Activated T-helper 1 cell treated with anti-CD3 and anti-CD28 coated beads, Interleukin-12 subunit alpha, Interleukin-12 subunit beta, Interleukin-2, Interleukin-4 antibody, amounts not matched to agents 30 ng/mL and 10 ng/mL and 1 ng/mL, durations not matched to agents 14 hours and 24 hours and 36 hours (primary cell): ENCODE measurements at regions of chr16 and their contacts with region 1.

Region 1: DNA sequence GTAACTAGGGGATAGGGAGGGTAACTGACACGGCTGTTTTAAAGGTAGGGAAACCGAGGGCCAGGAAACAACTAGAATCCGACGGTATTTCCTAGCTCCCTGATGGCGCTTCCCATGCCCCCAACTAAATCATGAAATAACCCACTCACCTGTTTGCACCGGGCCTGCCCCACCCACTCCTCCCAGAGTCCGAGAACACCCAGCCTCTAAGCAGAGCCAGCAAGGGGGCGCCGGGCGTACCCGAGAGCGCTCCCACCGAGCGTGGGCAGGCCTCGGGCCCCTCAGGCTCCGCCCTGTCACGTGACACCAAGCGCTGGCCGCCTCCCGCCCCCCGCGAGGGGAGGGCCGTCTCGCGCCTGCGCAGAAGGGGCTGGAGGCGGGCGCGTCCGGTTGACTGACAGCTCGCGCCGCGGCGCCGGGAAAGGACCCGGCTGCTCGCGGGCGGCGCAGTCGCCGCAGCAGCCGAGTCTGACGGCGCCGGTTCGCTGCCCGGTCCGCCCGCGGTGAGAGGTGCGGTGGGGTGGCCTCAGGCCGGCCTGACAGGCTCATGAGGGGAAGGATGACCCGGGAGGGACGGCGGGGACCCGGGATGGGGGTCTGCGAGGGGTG is at the start of gene KIAA0513:
- DNase-seq: peak; percentile 96
- H3K4me3 Mint-ChIP-seq: peak within 1 kb of the TSS; percentile 91
- H3K27ac Mint-ChIP-seq: peak within 1 kb of the TSS; percentile 93
- H3K4me1 Mint-ChIP-seq: peaks cover 36% of the 10 kb centered on the region
- H3K27me3 Mint-ChIP-seq: no peaks in the 10 kb centered on the region
- total RNA-seq, gene KIAA0513: 12.6 and 12.9 TPM in 2 replicates

Region 2: DNA sequence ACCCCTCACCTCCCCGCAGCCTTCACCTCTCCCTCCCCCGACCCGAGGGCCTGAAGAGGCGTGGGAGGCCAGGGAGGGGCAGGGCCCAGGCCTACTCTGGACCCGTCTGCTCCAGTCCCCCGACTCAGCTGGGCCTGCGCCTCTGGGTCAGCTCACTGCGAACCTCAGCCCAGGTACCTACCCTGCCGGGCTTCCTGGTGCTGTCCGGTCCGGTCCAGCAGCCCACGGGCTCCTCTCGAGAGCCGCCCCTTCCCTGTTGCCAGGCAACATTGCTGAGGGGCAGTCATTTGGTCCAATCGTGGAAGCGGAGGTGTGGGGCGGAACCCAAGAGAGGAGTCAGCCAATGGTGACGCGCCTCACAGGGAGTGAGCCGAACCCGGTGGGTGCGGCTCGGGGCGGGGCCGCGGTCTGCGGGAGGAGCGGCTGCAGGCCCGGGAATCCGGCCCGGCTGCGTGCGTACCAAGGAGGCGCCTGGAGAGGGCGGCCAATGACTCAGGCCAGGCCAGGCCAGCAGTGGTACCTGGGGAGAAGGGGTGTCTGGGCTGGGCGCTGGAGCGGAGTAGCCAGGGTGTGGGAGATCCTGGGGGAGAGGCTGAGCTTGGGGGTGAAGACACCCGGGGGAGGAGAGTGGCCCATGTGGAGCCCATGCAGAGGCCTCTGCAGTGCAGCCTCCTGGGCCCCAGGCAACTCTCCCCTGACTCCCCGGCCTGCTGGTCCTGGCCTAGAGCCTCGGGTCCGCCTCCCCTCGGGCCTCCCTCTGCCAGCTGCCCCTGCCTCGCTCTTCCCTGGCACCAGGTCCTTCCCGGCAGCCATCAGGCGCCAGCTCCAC is 522.8 kb before region 1 on chr16 and contains the start of gene MEAK7:
- intact Hi-C with region 1: loop called (anchors 5 kb)
- DNase-seq: peak; percentile 97
- H3K4me3 Mint-ChIP-seq: peak within 1 kb of the TSS; percentile 85
- H3K27ac Mint-ChIP-seq: peak within 1 kb of the TSS; percentile 81
- H3K4me1 Mint-ChIP-seq: peaks cover 46% of the 10 kb centered on the region
- H3K27me3 Mint-ChIP-seq: no peaks in the 10 kb centered on the region
- total RNA-seq, gene MEAK7: 10.6 and 10.9 TPM in 2 replicates

Region 3: GRCh38 chr16:84647828-84648594 is 379.4 kb before region 1 on chr16 and contains the start of gene KLHL36:
- intact Hi-C with region 1: loop called (anchors 1 kb)
- DNase-seq: peak; percentile 76
- H3K4me3 Mint-ChIP-seq: peak within 1 kb of the TSS; percentile 95
- H3K27ac Mint-ChIP-seq: peak within 1 kb of the TSS; percentile 92
- H3K4me1 Mint-ChIP-seq: peaks cover 48% of the 10 kb centered on the region
- H3K27me3 Mint-ChIP-seq: peaks cover 14% of the 10 kb centered on the region
- total RNA-seq, gene KLHL36: 39.3 and 42.6 TPM in 2 replicates

Region 4: DNA sequence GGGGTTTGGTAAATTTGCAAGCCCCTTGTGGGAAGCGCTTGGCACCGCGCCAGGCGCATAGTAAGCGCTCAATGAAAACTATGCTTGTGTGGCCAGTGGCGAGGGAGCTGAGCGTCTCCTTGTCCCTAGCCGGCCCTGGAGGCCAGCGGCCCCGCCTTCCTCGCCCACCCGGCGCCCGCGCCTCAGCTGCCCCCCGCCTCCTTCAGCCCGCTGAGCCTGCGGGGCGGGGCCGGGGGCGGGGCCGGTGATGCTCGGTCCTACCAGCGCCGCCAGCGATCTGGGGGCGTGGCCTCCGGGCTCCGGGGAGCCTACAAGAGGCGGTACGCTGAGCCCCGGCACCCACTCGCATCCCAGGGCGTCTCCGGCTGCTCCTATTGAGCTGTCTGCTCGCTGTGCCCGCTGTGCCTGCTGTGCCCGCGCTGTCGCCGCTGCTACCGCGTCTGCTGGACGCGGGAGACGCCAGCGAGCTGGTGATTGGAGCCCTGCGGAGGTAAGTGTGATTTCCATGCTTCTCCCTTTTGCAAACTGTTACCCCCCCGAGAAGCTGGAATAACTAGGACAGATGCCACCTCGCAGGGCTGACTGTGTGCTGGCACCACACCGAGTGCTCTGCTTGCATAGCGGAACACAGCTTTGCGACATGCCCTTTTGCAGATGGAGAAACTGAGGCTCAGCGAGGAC is 207.7 kb before region 1 on chr16 and contains the start of gene CRISPLD2:
- intact Hi-C with region 1: loop called (anchors 1 kb)
- DNase-seq: peak; percentile 82
- H3K4me3 Mint-ChIP-seq: peak within 1 kb of the TSS; percentile 68
- H3K27ac Mint-ChIP-seq: no peak within 1 kb of the TSS
- H3K4me1 Mint-ChIP-seq: peaks cover 9% of the 10 kb centered on the region
- H3K27me3 Mint-ChIP-seq: peaks cover 28% of the 10 kb centered on the region
- total RNA-seq, gene CRISPLD2: 0.20 TPM in 1 of 2 replicates, not detected in the other

Region 5: GRCh38 chr16:85055503-85056210 is 28.2 kb after region 1 on chr16:
- intact Hi-C with region 1: loop called (anchors 1 kb)
- DNase-seq: peak; percentile 75
- H3K4me3 Mint-ChIP-seq: peak overlapping the region; percentile 60
- H3K27ac Mint-ChIP-seq: peak overlapping the region; percentile 84
- H3K4me1 Mint-ChIP-seq: peaks cover 31% of the 10 kb centered on the region
- H3K27me3 Mint-ChIP-seq: peaks cover 10% of the 10 kb centered on the region

Region 6: DNA sequence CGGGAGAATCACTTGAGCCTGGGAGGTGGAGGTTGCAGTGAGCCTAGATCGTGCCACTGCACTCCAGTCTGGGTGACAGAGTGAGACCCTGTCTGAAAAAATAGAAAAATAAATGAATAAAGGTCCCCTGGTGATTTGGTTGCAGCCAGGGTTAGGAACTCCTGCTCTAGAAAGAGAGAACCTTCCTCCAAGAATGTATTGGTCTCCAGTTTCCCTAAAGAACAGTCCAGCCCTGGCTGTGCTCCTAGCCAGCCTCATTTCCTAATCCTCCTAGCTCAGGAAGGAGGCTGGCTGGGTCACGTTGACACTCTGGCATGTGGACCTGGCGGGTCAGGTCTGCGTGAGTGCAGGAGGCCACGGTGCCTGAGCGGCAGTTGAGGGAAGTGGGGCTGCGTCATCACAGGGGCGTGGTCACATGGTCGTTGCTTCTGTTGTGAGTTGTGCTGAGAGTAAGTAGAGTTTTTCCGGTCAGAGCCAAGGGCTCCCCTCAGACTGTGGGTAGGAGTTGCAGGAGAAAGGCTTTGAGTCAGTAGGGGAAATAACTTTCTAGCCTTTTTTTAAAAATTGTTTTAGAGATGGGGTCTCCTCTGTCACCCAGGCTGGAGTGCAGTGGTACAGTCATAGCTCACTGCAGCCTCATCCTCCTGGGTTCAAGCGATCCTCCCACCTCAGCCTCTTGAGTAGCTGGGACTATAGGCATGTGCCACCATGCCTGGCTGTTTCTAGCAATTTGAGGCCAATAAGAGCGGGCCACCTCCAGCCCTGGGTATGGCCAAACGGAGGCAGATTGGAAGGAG is 278.7 kb after region 1 on chr16:
- intact Hi-C with region 1: loop called (anchors 1 kb)
- DNase-seq: peak; percentile 80
- H3K4me3 Mint-ChIP-seq: peak overlapping the region; percentile 55
- H3K27ac Mint-ChIP-seq: peak overlapping the region; percentile 89
- H3K4me1 Mint-ChIP-seq: peaks cover 42% of the 10 kb centered on the region
- H3K27me3 Mint-ChIP-seq: no peaks in the 10 kb centered on the region

Region 7: GRCh38 chr16:85610508-85611332 is 583.3 kb after region 1 on chr16:
- intact Hi-C with region 1: loop called (anchors 2 kb)
- DNase-seq: peak; percentile 75
- H3K4me3 Mint-ChIP-seq: peak overlapping the region; percentile 80
- H3K27ac Mint-ChIP-seq: peak overlapping the region; percentile 63
- H3K4me1 Mint-ChIP-seq: peaks cover 26% of the 10 kb centered on the region
- H3K27me3 Mint-ChIP-seq: peaks cover 13% of the 10 kb centered on the region